ENCODE measurements at regions of chr1 and their contacts with region 1.

Region 1: DNA sequence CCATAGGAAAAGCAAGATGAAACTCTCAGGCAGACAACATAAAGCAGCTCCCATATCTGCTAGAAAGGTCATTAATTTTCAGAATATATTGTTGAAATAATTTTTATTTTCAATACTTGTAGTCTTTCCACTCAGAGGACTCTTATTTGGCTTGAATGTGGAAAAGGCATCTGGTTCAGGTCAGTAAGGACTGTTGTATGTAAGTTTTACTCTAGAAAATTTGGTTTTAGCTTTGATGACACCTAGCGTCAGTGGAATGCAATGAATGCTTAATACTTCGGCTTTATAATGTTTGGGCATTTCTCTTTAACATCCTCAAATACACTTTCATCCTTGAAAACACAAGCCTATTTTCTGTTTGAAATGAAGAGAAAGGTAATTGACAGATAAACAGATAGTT is 63.3 kb downstream of the LRRC40 start:
- DNase-seq: no peak
- H3K4me3 ChIP-seq: no peak overlapping the region
- CTCF ChIP-seq: no peak

Region 2: DNA sequence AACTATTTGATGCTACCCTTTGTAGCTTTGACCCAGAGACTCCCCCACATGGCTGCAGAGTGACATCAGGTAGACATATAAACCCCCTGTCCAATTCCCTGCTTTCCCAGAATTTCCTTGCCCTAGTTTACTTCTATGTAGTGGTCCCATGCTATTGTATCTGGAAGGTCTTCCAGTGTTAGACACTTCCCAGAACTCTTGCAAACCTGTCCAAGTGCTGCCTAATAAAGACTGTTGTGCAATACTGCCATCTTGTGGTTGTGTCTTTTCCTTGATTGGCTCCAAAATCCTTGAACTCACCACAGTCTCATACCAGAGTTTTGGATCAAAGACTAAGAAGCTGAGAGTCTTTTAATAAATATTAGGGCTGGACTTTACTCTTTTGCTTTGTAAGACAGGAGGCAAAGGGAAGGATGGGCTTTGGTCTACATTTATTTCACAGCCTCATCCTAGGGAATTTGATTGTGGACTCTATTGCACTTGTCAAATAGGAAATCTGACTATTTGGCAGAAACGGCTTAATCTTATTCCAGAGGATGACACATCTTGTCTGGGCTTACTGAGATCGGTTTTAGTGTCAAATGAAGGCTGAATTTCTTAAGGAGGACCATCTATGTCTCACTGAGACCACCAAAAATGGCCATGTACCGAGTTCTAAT is 404.4 kb before region 1 on chr1:
- CTCF ChIA-PET with region 1: interaction called, 12 read pairs
- POLR2A ChIA-PET with region 1: no interaction called
- DNase-seq: peak; percentile 23
- H3K4me3 ChIP-seq: no peak overlapping the region
- CTCF ChIP-seq: peak; percentile 61

Region 3: GRCh38 chr1:70034403-70034802 is 107.7 kb before region 1 on chr1:
- CTCF ChIA-PET with region 1: interaction called, 98 read pairs
- POLR2A ChIA-PET with region 1: no interaction called
- DNase-seq: peak; percentile 29
- H3K4me3 ChIP-seq: no peak overlapping the region
- CTCF ChIP-seq: peak; percentile 60